Endothelial cell of umbilical vein (primary cell): ENCODE measurements at regions of chr4 and their contacts with region 1.

Region 1: GRCh38 chr4:65014078-65014477 is 604.8 kb upstream of the TECRL start:
- DNase-seq: no peak
- H3K4me3 ChIP-seq: no peak overlapping the region
- H3K27ac ChIP-seq: no peak overlapping the region
- H3K4me1 ChIP-seq: no peaks in the 10 kb centered on the region
- H3K27me3 ChIP-seq: no peaks in the 10 kb centered on the region
- CTCF ChIP-seq: no peak
- POLR2A ChIP-seq: no peak

Region 2: GRCh38 chr4:64954527-64954926 is 59.6 kb before region 1 on chr4:
- CTCF ChIA-PET with region 1: no interaction called
- POLR2A ChIA-PET with region 1: no interaction called
- dilution Hi-C with region 1: no loop called
- intact Hi-C with region 1: no loop called
- DNase-seq: no peak
- H3K4me3 ChIP-seq: no peak overlapping the region
- H3K27ac ChIP-seq: no peak overlapping the region
- H3K4me1 ChIP-seq: no peaks in the 10 kb centered on the region
- H3K27me3 ChIP-seq: no peaks in the 10 kb centered on the region
- CTCF ChIP-seq: no peak
- POLR2A ChIP-seq: no peak

Region 3: GRCh38 chr4:66688674-66689073 is 1674.6 kb after region 1 on chr4:
- CTCF ChIA-PET with region 1: no interaction called
- POLR2A ChIA-PET with region 1: no interaction called
- dilution Hi-C with region 1: no loop called
- intact Hi-C with region 1: loop called (anchors 5 kb)
- DNase-seq: peak; percentile 29
- H3K4me3 ChIP-seq: no peak overlapping the region
- H3K27ac ChIP-seq: no peak overlapping the region
- H3K4me1 ChIP-seq: no peaks in the 10 kb centered on the region
- H3K27me3 ChIP-seq: no peaks in the 10 kb centered on the region
- CTCF ChIP-seq: peak in 1 of 2 donors; percentile 11
- POLR2A ChIP-seq: no peak